HEK293 (cell line): ENCODE measurements at regions of chr5 and their contacts with region 1.

Region 1: DNA sequence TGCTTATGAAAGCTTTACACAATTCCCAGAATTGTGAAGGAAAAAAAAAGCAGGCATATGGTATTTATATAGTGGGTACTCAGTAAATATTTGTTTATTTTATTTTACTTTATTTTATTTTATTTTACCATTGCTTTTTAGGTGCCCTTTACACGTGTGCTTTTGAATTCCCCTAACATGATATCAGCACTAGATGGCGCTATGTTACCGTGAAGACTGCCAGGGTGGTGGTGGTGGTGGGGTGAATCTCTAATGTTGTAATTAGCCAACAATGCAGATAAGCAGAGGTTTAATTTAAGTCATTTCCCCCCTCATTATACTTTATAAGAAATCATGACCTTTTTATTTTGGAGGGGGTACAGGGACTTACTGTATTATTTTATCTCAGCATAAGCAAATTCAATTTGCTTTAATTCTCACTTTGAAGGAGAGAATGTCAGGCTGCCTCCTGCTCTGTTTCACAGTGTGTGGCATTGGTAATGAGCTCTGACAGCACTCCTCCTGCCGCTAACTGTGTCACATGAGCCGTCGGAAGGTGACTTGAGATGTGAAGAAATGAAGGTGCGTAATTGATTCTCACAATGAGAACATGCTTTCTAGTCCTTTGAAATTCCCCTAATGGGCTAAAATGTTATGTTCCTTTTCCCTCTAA is 165.6 kb downstream of the YTHDC2 start:
- H3K4me3 ChIP-seq: no peak overlapping the region
- H3K27ac ChIP-seq: no peak overlapping the region
- H3K4me1 ChIP-seq: no peaks in the 10 kb centered on the region
- CTCF ChIP-seq: 0 out of 2 replicates have a peak, but pooled peaks have one; percentile 35

Region 2: DNA sequence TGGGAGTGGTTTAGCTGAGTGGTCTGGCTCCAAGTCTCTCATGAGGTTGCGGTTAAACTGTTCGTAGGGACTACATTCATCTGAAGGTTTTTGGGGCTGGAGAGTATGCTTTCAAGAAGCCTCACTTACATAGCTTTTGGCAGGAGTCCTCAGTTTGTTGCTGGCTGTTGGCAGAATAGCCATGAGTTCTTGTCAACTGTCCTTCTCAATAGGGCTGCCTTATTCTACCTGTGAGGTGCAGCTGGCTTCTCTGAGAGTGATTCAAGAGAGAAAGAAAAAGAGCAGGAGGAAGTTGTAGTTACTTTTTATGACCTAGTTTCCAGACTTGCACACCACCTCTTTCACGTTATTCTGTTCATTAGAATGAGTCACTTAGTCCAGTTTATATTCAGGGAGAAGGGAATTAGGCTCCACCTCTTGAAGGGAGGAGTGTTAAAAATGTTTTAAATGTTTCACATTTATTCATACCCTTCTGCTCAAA is 132.3 kb before region 1 on chr5:
- CTCF ChIA-PET with region 1: no interaction called
- POLR2A ChIA-PET with region 1: no interaction called
- H3K4me3 ChIP-seq: no peak overlapping the region
- H3K27ac ChIP-seq: no peak overlapping the region
- H3K4me1 ChIP-seq: no peaks in the 10 kb centered on the region
- CTCF ChIP-seq: no peak

Region 3: DNA sequence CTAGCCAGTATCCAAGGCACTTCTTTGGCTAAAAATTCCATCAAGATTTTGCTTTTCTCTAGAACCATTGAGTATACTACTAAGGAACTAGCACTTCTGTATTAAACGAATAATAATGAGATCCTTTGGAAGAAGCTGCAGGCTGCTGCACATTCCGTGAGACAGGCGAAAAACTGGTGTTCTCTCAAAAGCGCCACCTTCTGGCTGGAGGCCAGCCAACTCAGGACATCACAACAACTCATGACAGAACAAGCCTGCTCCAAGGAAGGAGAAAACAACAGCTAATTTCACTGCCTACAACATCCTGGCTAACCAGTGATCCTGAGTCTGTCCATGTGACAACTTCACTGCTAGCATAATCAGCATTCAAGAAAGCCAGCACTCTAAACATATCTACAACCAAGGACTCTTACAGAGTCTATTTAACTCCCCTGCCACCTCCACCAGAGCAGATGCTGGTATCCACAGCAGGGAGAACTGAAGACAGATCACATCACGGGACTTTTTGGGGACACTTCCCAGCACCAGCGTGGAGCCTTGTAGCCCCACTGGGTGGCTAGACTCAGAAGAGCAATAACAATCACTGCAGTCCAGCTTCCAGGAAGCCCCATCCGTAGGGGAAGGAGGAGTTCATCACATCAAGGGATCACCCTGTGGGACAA is 15.0 kb before region 1 on chr5:
- CTCF ChIA-PET with region 1: interaction called, 16 read pairs
- POLR2A ChIA-PET with region 1: no interaction called
- H3K4me3 ChIP-seq: no peak overlapping the region
- H3K27ac ChIP-seq: no peak overlapping the region
- H3K4me1 ChIP-seq: no peaks in the 10 kb centered on the region
- CTCF ChIP-seq: no peak

Region 4: DNA sequence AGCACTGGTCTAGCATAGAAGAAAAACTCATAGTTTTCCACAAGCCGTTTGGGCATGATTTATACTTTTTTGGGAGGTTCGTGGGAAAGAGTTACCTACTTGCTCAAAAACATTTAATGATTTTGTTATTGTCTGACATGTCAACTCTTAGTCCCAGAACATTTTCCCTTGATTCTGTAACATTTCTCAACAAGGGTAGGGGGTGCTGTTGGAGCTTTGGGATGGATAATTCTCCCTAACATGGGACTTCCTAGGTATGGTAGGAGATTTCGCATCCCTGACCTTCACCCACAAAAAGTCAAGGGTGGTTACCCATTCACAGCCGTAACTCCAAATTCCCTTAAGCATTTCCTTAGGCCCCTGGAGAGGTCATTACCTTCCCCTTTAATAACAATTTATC is 212.4 kb after region 1 on chr5:
- CTCF ChIA-PET with region 1: no interaction called
- POLR2A ChIA-PET with region 1: no interaction called
- H3K4me3 ChIP-seq: no peak overlapping the region
- H3K27ac ChIP-seq: no peak overlapping the region
- H3K4me1 ChIP-seq: no peaks in the 10 kb centered on the region
- CTCF ChIP-seq: no peak

Region 5: DNA sequence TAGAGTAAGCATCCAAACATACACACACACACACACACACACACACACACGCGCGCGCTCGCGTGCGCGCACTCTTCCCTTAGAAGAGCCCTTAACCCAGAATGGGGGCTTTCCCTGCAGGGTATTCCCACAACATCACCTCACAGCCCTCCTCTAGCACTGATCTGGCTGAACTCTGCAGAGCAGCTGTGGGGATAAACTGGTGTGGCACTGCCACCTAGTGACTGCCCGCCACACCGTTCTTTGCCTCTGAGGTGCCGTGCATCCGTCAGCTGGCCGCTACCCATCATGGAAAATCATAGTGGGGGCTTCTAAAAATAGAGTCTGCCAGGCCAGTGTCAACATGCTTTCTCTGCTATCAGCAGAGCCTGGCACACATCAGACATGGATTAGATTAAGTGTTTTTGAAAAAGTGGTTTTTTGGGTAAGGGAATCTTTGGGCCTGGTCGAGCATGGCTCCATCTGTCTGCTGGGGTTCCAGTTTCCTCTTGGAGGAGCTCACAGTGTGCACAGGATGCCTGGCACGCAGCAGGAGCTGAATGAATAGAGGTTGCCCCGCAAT is 770.9 kb after region 1 on chr5:
- CTCF ChIA-PET with region 1: interaction called, 36 read pairs
- POLR2A ChIA-PET with region 1: no interaction called
- H3K4me3 ChIP-seq: no peak overlapping the region
- H3K27ac ChIP-seq: no peak overlapping the region
- H3K4me1 ChIP-seq: no peaks in the 10 kb centered on the region
- CTCF ChIP-seq: peak; percentile 69